ENCODE measurements at regions of chr12 and their contacts with region 1.

Region 1: GRCh38 chr12:46342562-46343033 is 30.0 kb downstream of the SLC38A2 start:
- DNase-seq: peak in 2 of 5 donors; percentile 14 to 31
- ATAC-seq: peak in 3 of 4 donors; percentile 75 to 83 (median 78)
- H3K4me3 ChIP-seq: no peak overlapping the region
- H3K27ac ChIP-seq: no peak overlapping the region
- H3K4me1 ChIP-seq: peaks cover 0 to 6% (median 0%) of the 10 kb centered on the region in 12 donors
- H3K27me3 ChIP-seq: no peaks in the 10 kb centered on the region
- CTCF ChIP-seq: peak; percentile 50 to 81 (median 70)
- POLR2A ChIP-seq: no peak

Region 2: DNA sequence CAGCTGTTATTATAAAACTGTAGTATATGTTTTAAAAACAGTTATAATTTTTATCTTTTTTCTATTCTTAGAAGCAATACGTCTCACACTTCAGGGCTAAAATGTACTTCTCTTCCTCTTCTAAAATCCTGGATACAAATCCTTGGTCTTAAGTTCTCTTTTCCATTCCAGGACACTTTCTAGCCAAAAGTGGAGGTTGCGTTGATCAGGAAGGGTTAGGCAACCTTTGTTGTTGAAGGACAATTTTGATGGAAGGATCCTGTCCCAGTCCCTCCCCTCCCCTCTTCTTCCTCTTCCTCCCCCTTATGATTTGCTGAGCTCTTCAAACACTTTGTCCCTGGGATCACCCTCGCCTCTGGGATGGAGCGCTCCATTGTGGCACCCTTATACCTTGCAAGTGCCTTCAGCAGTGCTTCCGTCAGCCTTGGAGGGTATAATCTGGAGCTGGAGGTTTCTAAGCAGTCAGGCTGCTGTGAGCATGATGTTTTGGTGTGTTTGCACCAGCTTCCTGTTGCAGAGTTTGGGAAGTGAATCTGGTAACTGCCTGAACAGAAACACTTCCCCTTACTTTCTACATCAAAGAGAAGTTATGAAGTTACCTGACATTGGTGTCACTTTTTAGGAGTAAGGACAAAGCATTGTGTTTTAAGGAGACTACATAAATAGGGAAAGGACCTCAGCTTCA is 117.4 kb after region 1 on chr12:
- intact Hi-C with region 1: no loop called
- DNase-seq: peak in 1 of 5 donors; percentile 13
- ATAC-seq: peak in 3 of 4 donors; percentile 23 to 57 (median 49)
- H3K4me3 ChIP-seq: no peak overlapping the region
- H3K27ac ChIP-seq: peak overlapping the region in 5 of 12 donors; percentile 6 to 47 (median 33)
- H3K4me1 ChIP-seq: peaks cover 0 to 73% (median 36%) of the 10 kb centered on the region in 12 donors
- H3K27me3 ChIP-seq: no peaks in the 10 kb centered on the region
- CTCF ChIP-seq: no peak
- POLR2A ChIP-seq: no peak

Region 3: DNA sequence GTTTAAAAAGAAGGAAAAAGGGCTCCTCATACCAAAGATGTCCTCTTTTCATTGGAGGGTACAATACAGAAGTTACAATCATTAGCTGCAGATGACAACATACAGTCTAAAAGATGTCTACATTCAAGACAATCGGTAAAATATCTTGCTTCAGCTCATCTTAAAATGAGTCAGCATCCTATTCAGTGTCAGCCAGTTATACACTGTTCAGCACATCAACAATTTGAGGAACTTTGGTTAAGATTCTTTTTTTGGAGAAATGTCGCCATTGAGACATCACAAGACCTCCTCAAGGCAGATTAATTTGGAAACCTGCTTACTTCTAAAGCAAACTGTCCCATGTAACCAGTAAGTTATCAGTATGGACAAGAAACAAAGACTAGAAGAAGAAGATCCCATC is 583.9 kb after region 1 on chr12:
- intact Hi-C with region 1: loop called in 8 of 10 experiments (anchors 5 to 10 kb)
- DNase-seq: no peak
- ATAC-seq: no peak
- H3K4me3 ChIP-seq: no peak overlapping the region
- H3K27ac ChIP-seq: peak overlapping the region in 1 of 12 donors; percentile 37
- H3K4me1 ChIP-seq: no peaks in the 10 kb centered on the region
- H3K27me3 ChIP-seq: no peaks in the 10 kb centered on the region
- CTCF ChIP-seq: no peak
- POLR2A ChIP-seq: no peak

Region 4: GRCh38 chr12:46983393-46984266 is 641.0 kb after region 1 on chr12:
- intact Hi-C with region 1: loop called in 1 of 10 experiments (anchors 10 kb)
- DNase-seq: no peak
- ATAC-seq: peak in 3 of 4 donors; percentile 68 to 75 (median 70)
- H3K4me3 ChIP-seq: no peak overlapping the region
- H3K27ac ChIP-seq: no peak overlapping the region
- H3K4me1 ChIP-seq: peaks cover 0 to 3% (median 0%) of the 10 kb centered on the region in 12 donors
- H3K27me3 ChIP-seq: no peaks in the 10 kb centered on the region
- CTCF ChIP-seq: peak; percentile 49 to 78 (median 66)
- POLR2A ChIP-seq: no peak